Right ventricle myocardium inferior (tissue), 1 donor: ENCODE measurements at regions of chr6 and their contacts with region 1.

Region 1: DNA sequence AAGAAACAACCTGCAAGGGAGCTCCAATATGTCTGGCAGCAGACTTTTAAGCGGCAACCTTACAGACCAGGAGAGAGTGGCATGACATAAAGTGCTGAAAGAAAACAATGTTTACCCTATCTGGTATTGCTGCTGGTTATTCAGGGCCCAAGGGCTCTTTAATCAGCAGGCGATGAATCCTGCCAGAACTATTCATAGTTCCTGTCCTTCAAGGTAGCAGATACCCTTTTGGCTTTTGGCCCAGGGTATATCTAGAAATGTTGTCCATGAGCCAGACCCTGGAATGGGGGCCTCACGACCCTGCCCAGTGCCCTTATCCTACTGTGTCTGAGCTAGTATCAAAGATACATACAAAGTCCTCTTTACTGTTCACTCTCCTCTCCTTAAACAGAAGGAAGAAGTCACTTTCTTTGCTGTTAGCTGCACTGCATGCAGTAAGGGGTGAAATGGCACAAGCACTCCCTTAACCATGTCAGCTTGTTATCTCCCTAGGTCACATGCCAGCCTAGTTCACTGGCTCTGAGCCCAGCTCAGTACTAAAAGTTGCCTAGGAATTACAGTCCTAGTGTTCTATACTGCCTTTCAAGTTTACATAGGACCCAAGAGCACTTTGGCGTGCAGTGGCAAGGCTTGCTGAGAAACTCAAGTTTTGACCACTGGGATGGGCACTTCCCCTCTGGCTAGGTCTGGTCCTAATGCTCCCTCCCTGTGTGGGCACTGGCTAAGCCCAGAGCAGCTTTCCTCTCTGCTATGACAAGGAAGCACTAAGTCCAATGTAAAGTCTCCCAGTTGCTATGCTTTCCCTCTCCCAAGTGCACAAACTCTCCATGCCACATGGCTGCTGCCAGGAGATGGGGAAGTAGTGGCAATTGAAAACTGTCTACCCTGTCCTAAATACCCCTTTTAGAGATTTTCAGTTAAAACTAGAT is 122.0 kb downstream of the HTR1B start:
- DNase-seq: peak; percentile 27
- ATAC-seq: peak; percentile 95

Region 2: DNA sequence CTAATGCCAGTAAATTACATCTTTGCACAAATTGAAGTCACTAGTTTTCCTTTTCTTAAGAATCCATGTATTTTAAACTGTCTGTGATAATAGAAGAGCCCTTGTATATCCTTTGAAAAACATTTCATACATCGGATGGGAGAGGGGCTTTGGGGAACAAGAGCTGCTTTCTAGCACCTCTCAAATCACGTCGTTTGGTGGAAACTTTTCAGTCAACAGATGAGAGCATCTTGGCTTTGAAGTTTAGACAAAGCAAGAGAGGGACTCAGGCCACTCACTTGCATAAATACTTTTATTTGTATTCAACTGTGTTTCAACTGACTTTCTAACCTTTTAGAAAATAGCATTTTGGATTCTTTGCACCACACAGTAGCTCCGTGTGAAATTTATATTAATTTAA is 766.6 kb before region 1 on chr6:
- intact Hi-C with region 1: no loop called
- DNase-seq: no peak
- ATAC-seq: no peak

Region 3: GRCh38 chr6:76835293-76835692 is 506.0 kb before region 1 on chr6:
- intact Hi-C with region 1: loop called (anchors 5 kb)
- DNase-seq: no peak
- ATAC-seq: no peak